Left cardiac atrium (tissue), 4 donors: ENCODE measurements at regions of chr1 and their contacts with region 1.

Region 1: DNA sequence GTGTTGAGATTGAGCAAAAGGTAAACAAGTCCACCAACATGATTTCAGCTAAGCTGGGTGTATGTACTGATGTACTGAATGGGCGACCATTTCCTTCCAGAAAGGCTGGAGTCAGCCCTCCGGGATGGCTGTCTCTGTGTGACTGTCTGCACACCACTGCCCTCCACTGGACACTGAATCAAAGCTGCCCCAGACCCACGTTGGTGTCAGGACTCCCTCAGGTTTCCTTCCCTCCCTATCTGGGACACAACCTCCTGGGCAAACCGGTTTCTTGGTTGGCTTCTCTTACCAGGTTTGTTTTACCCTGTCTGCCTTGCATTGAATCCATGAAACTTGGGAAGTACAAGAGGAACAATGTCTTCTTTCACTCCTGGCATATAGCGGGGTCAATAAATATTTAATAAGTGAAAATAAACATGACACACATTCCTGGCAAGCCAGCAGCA is 5.3 kb upstream of the SRP9 start:
- DNase-seq: peak; percentile 88
- ATAC-seq: peak; percentile 77 to 84

Region 2: DNA sequence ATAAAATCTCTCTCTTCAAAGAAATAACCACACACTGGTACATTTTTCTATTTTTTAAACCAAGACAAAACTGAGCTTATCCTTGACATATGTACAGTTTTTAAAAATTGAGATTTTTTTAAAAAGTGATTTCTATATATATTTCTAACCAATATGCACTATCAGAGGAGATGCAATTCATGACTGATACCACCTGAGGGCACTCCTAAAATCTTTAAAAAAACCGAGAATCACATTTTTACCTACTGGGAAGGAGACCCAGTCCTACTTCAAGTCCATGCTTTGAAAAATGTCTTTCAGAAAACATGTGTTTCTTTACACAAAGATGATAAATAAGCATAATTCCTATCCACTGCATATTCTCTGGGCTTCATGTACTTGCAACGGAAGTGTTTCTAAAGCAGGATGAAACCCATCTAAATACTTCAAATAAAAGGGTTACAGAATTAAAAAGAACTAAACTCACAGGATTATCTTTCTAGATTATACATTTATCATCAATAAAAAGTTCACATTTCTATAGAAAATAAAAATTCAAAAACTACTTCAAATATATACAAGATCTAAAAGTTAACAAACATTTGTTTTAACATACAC is 218.0 kb before region 1 on chr1:
- intact Hi-C with region 1: loop called (anchors 5 to 10 kb)
- DNase-seq: no peak
- ATAC-seq: peak; percentile 44 to 47

Region 3: DNA sequence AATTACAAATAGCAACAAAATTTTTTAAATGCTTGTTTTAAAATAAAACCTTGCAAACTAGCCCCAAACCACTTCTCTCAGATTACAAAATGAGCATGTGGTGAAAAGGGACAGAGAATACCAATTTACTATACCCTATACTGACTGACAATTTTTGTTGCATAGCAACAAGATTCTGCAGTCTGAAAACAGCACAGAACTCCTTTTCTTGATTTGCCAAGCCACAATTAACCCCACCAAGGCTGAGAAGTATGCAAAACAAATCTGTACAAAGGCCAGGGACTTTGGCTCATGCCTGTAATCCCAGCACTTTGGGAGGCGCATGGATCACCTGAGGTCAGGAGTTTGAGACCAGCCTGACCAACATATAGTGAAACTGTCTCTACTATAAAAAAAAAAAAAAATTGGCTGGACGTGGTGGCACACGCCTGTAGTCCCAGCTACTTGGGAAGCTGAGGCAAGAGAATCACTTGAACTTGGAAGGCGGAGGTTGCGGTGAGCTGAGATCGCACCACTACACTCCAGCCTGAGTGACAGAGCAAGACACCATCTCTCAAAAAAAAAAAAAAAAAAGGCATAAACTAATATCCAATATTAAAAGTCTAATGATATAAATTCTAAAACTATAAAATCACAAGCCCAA is 141.2 kb before region 1 on chr1:
- intact Hi-C with region 1: no loop called
- DNase-seq: no peak
- ATAC-seq: no peak

Region 4: DNA sequence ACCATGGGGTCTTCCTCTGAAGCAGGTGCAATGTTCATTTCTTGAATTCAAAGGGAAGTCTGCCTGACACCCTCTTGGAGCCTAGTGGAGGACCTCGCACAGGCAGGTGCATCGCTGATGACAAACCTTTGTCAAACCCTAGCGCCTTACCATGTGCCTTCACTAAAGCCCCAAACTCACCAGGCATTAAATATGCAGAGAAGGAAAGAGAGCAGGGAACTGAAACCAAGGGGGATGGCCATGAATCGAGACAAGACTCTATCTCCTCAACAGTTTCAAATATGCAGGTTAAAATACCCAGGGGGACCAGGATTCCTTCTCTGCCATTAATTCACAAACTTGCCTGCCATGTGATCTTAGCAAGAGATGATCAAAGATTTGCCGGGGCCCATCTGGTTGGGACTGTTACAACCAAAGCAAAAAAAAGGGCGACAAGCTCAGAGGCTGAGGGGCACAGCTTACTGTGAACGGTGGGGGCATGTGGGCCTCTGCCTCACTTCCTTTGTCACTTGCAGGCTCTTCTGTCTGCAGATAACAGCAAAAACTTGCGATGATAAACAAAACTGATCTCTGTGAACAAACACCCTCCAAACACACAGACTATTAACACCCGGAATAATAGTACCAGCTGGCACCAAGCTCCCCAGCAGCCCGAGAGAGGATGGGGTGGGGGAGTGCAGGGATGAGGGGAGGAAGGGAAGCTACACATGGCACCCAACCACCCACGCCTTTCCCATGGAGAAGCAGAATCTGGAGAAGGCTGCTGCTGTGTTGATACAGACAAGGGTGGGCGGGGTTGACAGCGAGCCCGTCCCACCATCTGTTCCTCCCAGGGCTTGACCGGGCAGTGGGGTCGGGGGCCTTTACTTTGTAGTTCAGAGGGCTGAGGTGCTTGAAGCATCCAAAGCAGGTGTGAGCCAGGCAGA is 75.9 kb after region 1 on chr1:
- intact Hi-C with region 1: no loop called
- DNase-seq: no peak
- ATAC-seq: peak in 1 of 2 donors; percentile 3